Caco-2 (cell line): ENCODE measurements at regions of chr12 and their contacts with region 1.

Region 1: DNA sequence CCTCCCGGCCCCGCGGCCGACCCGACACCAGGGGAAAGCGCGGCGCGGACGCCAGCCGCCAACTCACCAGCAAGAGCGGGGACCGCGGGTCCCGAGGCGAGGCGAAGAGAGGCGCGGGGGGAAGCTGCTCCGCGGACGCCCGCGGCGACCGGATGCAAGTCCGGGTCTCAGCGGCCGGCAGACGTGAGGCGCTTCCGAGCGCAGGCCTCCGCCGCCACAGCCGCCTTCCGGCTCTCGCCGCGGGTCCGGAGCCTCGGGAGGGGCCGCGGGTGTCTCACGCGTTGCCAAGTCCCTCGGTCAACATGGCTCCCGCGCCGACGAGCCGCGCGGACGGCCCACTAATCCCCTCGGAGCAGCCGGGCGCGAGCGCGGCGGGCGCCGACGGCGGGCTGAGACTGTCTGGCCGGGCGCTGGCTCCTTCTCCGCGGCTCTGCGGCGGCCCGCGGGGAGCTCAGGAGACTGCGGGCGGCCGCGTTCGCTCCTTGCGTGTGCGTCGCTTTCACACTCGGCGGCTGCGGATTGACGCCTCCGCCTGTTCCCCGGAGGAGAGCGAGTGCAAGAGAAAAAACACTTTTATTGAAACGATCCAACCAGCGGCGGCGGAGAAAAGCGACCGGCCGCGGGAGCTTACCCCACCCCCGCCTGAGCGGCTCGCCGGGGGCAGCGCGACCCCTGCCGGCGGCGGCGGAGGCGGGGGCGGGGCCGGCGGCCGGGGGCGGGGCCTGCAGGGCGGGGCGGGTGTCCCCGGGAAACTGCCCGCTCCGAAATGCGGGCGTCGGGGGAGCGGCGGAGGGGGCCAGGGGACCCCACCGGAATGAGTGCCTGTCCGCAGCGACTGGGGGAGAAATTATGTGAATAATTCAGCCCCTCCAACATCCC is at the start of gene CDK17:
- DNase-seq: peak; percentile 80 to 83
- H3K4me3 ChIP-seq: peak within 1 kb of the TSS; percentile 69
- H3K4me3 Mint-ChIP-seq: peak within 1 kb of the TSS; percentile 96
- H3K27ac Mint-ChIP-seq: peak within 1 kb of the TSS; percentile 84
- H3K4me1 ChIP-seq: 0 out of 2 replicates have a peak, but pooled peaks cover 9% of the 10 kb centered on the region
- H3K4me1 Mint-ChIP-seq: peaks cover 18% of the 10 kb centered on the region
- H3K27me3 ChIP-seq: no peaks in the 10 kb centered on the region
- H3K27me3 Mint-ChIP-seq: no peaks in the 10 kb centered on the region
- CTCF ChIP-seq: peak in 1 of 2 experiments; percentile 37
- total RNA-seq, gene CDK17: 11.5 and 11.7 TPM in 2 replicates

Region 2: DNA sequence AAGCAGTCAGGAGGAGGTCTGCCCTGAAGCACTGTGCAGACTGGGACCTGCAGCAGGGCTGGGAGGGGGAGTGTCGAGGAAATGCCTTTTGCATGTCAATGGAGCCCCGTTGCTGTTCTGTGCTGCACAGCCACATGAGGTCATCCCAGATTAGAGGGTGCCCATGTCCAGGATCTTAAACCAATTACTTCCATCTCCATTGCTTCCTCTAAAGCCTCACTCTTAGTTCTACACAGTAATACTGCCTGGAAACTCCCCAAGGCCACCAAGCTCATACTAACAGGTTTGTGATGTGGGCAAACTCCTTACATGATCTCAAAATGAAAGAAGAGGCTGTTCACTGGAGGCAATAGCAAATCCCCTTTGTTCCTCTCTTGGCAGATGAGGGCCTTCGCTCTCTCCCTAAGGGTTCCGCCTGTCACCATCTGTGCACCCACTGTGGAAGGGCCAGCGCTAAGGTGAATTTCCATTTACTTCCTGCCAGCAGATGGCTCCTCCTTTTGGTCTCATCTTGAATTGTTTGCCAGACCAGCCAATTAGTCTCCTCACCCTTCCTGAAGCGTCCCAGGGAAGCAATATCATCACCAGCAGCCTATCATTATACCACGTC is 329.4 kb before region 1 on chr12:
- CTCF ChIA-PET with region 1: no interaction called
- POLR2A ChIA-PET with region 1: no interaction called
- intact Hi-C with region 1: no loop called
- DNase-seq: peak in 1 of 2 experiments; percentile 19
- H3K4me3 ChIP-seq: no peak overlapping the region
- H3K4me3 Mint-ChIP-seq: no peak overlapping the region
- H3K27ac Mint-ChIP-seq: no peak overlapping the region
- H3K4me1 ChIP-seq: no peaks in the 10 kb centered on the region
- H3K4me1 Mint-ChIP-seq: peaks cover 7% of the 10 kb centered on the region
- H3K27me3 ChIP-seq: no peaks in the 10 kb centered on the region
- H3K27me3 Mint-ChIP-seq: no peaks in the 10 kb centered on the region
- CTCF ChIP-seq: peak in 1 of 2 experiments; percentile 13

Region 3: DNA sequence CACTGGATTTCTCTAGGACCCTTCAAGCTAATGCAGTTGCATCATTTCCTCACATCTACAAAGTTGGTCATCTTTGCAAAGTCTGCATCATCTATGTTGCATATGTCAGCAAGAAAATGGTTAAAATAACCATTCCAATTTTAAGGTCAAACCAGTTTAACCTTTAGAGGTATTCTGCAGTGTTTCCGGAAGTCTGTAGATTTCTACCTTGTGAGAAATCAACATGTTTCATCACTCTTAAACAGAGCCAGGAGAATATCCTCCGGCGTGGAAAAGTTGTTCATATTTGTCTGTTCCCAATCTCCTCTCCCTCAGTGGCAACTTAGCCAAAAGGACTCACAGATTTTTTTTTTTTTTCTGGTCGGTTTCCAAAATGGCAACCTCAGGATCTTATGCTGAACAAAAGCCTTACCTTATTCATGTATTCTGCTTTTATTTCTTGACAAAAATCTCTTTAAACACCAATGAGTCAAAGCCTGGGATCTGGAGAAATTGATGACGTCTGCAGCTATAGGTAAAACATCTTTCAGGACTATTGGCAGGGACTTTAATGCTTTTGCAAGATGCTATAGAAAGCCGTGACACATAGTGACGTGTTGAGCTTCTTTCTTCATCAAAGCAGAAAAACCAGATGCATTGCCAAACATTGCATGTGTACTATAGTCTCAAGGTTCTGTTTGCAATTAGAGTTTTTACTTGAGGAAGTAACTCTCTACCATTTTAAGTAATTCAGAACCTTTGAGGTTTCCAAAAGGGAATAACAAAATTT is 16.1 kb after region 1 on chr12:
- CTCF ChIA-PET with region 1: interaction called, 4 read pairs
- POLR2A ChIA-PET with region 1: no interaction called
- intact Hi-C with region 1: loop called (anchors 1 kb)
- DNase-seq: peak in 1 of 2 experiments; percentile 41
- H3K4me3 ChIP-seq: peak overlapping the region; percentile 19; the same call in 1 of the 2 replicates
- H3K4me3 Mint-ChIP-seq: peak overlapping the region; percentile 64
- H3K27ac Mint-ChIP-seq: peak overlapping the region; percentile 71
- H3K4me1 ChIP-seq: peaks cover 8% of the 10 kb centered on the region
- H3K4me1 Mint-ChIP-seq: no peaks in the 10 kb centered on the region
- H3K27me3 ChIP-seq: no peaks in the 10 kb centered on the region
- H3K27me3 Mint-ChIP-seq: no peaks in the 10 kb centered on the region
- CTCF ChIP-seq: no peak

Region 4: DNA sequence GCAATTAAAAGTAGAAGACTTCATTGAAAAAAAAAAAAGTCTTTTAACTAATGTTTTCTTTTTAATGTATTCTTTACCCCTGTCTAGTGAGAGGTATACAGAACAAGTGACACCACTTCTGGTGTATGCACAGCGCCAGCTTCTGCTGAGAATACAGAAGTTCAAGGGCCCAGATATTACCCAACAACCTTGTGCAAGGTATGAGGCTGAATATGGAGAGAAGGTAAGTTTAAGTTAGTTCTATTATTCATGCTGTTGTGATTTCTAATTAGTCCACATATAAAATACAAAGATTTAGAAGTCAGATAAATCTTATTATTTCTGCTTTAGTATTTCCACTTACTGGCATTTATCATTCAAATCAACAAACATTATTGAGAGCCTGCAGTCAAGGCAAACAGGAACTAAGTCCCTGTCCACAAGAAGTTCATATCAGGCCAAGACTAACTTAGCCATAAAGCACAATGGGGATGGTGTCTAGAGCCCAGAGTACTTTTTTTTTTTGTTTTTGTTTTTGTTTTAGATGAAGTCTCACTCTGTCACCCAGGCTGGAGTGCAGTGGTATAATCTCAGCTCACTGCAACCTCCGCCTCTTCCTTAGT is 258.1 kb after region 1 on chr12:
- CTCF ChIA-PET with region 1: no interaction called
- POLR2A ChIA-PET with region 1: no interaction called
- intact Hi-C with region 1: no loop called
- DNase-seq: no peak
- H3K4me3 ChIP-seq: no peak overlapping the region
- H3K4me3 Mint-ChIP-seq: no peak overlapping the region
- H3K27ac Mint-ChIP-seq: no peak overlapping the region
- H3K4me1 ChIP-seq: no peaks in the 10 kb centered on the region
- H3K4me1 Mint-ChIP-seq: peaks cover 6% of the 10 kb centered on the region
- H3K27me3 ChIP-seq: no peaks in the 10 kb centered on the region
- H3K27me3 Mint-ChIP-seq: peaks cover 13% of the 10 kb centered on the region
- CTCF ChIP-seq: no peak